ENCODE measurements at regions of chr3 and their contacts with region 1.

Region 1: DNA sequence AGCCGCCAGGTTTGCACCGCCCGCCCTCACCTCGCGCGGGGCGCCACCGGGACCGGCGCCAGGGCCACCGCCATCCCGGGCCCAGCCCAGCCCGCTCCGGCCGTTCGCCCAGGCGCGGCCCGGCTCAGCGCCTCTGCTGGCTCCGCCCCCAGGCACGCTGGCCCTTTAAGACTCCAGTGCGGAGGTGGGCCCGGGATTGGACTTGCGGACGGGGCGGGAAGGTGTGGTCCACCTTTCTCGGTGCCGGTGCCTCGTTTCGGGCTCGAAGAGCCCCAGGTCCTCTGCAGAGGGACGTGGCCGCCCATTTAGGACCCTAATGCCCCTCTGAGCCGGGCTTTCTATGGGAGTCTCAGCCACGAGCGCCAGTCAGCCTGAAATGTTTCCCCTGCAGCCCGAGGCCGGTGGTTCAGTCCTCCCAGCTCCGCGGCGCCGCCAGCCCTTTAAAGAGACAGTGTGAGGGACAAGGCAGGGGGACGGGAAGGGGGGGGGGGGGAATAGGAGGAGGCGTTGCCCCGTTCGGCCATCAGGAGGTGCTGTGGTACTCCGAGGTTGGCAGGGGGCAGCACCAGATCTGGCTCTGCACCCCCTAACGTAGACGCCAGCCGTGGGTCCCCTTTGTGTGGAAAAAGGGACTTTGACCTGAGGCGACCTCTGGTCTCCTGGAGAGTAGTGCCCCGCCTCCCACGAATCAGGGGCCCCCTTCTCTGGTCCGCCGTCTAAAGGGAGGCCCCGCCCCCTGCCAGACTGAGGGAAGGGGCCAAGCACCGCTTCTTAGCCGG is 1.0 kb downstream of the HYAL2 start:
- DNase-seq: peak; percentile 81
- H3K4me3 Mint-ChIP-seq: peak overlapping the region; percentile 79
- H3K27ac Mint-ChIP-seq: peak overlapping the region; percentile 83
- H3K4me1 Mint-ChIP-seq: peaks cover 35% of the 10 kb centered on the region
- H3K27me3 Mint-ChIP-seq: no peaks in the 10 kb centered on the region

Region 2: DNA sequence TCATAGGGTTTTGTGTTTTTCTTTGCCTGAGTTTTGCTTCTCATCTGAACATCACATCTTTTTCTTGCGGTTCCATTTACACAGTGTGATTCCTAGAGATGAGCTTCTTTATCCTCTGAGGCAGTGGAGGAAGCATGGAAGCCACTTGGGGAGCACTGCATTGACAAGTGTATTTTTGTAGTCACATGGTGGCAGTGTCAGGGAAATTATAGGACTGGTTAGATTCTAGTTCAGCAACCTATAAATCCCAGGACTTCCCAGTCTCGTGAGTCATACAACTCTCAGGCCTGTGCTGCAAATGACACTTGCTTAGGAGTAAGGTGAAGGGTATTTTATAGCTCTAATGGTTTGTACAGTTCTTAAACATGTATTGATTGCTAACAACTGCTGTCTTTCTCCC is 323.2 kb before region 1 on chr3:
- intact Hi-C with region 1: no loop called
- DNase-seq: no peak
- H3K4me3 Mint-ChIP-seq: no peak overlapping the region
- H3K27ac Mint-ChIP-seq: no peak overlapping the region
- H3K4me1 Mint-ChIP-seq: no peaks in the 10 kb centered on the region
- H3K27me3 Mint-ChIP-seq: no peaks in the 10 kb centered on the region

Region 3: GRCh38 chr3:50358911-50359759 is 37.6 kb after region 1 on chr3 and contains the start of gene TMEM115:
- intact Hi-C with region 1: loop called (anchors 1 kb)
- DNase-seq: peak; percentile 95
- H3K4me3 Mint-ChIP-seq: peak within 1 kb of the TSS; percentile 99
- H3K27ac Mint-ChIP-seq: peak within 1 kb of the TSS; percentile 96
- H3K4me1 Mint-ChIP-seq: peaks cover 43% of the 10 kb centered on the region
- H3K27me3 Mint-ChIP-seq: peaks cover 4% of the 10 kb centered on the region
- total RNA-seq, gene TMEM115: 23.6 and 25.4 TPM in 2 replicates